Astrocyte of the cerebellum (primary cell): ENCODE measurements at regions of chr1 and their contacts with region 1.

Region 1: GRCh38 chr1:50704126-50704525 is 255.9 kb downstream of the FAF1 start:
- DNase-seq: peak; percentile 12
- H3K4me3 ChIP-seq: no peak overlapping the region
- CTCF ChIP-seq: peak; percentile 80

Region 2: GRCh38 chr1:50615036-50615750 is 88.9 kb before region 1 on chr1:
- in situ Hi-C with region 1: loop called (anchors 5 kb)
- DNase-seq: no peak
- H3K4me3 ChIP-seq: no peak overlapping the region
- CTCF ChIP-seq: no peak